Heart left ventricle (tissue), 16 donors: ENCODE measurements at regions of chr12 and their contacts with region 1.

Region 1: DNA sequence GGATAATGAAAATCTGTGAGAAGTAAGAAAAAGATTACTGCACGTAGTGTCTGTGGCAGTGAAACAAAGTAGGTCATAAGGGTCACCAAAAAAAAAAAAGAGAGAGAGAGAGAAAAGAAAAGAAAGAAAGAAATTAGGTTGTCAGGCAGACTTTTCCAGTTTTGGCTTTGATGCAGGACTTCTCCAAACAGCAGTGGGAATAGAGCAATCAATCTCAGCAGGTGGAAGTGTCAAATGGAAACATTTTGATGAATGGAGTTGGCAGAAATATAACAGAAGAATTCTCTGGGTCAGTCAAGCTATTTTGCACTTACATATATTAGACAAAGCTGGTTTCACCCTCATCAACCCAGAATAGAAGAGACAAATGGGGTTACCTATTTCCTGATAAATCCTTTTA is 745.8 kb downstream of the SLC6A15 start:
- DNase-seq: no peak
- ATAC-seq: no peak
- H3K4me3 ChIP-seq: no peak overlapping the region
- H3K27ac ChIP-seq: no peak overlapping the region
- H3K4me1 ChIP-seq: no peaks in the 10 kb centered on the region
- H3K27me3 ChIP-seq: no peaks in the 10 kb centered on the region
- CTCF ChIP-seq: no peak
- POLR2A ChIP-seq: no peak

Region 2: DNA sequence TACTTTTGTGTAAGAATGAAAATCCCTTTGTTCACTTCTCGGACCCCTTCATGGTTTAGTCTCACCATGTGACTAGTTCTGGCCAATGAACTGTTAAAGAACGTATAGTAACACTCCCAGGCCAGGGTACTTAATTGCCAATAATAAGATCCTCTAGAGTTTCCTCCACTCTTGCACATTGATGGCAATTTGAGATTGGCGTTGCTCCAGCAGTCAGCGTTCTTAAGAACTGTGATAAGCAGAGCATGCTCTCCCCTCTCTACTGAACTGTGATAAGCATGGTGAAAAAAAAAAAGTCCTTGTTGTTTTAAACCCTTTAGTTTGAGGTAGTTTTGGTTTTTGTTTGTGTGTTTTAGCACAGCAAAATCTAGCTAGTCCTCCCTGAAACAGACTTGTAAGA is 108.7 kb before region 1 on chr12:
- intact Hi-C with region 1: no loop called
- DNase-seq: no peak
- ATAC-seq: no peak
- H3K4me3 ChIP-seq: no peak overlapping the region
- H3K27ac ChIP-seq: no peak overlapping the region
- H3K4me1 ChIP-seq: no peaks in the 10 kb centered on the region
- H3K27me3 ChIP-seq: no peaks in the 10 kb centered on the region
- CTCF ChIP-seq: no peak
- POLR2A ChIP-seq: no peak

Region 3: DNA sequence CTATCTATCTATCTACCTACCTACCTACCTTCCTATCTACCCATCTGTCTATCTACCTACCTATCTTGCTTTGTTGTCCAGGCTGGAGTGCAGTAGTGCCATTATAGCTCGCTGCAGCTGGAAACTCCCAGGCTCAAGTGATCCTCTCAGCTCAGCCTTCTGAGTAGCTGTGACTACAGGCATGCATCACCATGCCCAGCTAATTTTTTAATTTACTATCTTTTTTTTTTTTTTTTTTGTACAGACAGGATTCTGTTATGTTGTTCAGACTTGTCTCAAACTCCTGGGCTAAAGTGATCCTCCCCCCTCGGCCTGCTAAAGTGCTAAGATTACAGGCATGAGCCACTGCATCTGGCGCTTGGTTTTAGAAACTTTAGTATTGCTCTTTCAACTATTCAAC is 16.6 kb before region 1 on chr12:
- intact Hi-C with region 1: loop called in 1 of 10 experiments (anchors 2 kb)
- DNase-seq: no peak
- ATAC-seq: no peak
- H3K4me3 ChIP-seq: no peak overlapping the region
- H3K27ac ChIP-seq: no peak overlapping the region
- H3K4me1 ChIP-seq: no peaks in the 10 kb centered on the region
- H3K27me3 ChIP-seq: no peaks in the 10 kb centered on the region
- CTCF ChIP-seq: no peak
- POLR2A ChIP-seq: no peak

Region 4: GRCh38 chr12:84463741-84464495 is 297.1 kb after region 1 on chr12:
- intact Hi-C with region 1: no loop called
- DNase-seq: no peak
- ATAC-seq: no peak
- H3K4me3 ChIP-seq: no peak overlapping the region
- H3K27ac ChIP-seq: no peak overlapping the region
- H3K4me1 ChIP-seq: no peaks in the 10 kb centered on the region
- H3K27me3 ChIP-seq: no peaks in the 10 kb centered on the region
- CTCF ChIP-seq: no peak
- POLR2A ChIP-seq: no peak

Region 5: DNA sequence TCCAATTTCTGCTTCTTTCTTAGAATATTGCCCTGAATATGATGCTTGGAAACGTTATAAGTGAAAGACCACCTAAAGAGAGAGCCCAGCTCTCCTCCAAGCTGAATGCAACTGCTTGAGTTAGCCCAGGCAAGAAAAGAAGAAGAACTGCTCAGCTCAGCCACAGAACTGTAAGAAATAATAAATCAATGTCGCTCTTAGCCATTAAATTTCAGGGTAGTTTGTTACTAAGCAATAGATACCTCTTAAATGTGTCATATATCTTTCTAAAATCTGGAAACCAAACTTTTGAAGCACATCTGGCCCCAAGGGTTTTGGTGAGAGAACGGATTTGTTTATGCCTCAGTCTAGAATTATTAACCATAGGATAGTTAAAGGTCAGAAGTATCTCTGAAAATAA is 695.4 kb after region 1 on chr12:
- intact Hi-C with region 1: no loop called
- DNase-seq: no peak
- ATAC-seq: no peak
- H3K4me3 ChIP-seq: no peak overlapping the region
- H3K27ac ChIP-seq: no peak overlapping the region
- H3K4me1 ChIP-seq: no peaks in the 10 kb centered on the region
- H3K27me3 ChIP-seq: no peaks in the 10 kb centered on the region
- CTCF ChIP-seq: no peak
- POLR2A ChIP-seq: no peak